CD8-positive, alpha-beta T cell (primary cell): ENCODE measurements at regions of chr12 and their contacts with region 1.

Region 1: DNA sequence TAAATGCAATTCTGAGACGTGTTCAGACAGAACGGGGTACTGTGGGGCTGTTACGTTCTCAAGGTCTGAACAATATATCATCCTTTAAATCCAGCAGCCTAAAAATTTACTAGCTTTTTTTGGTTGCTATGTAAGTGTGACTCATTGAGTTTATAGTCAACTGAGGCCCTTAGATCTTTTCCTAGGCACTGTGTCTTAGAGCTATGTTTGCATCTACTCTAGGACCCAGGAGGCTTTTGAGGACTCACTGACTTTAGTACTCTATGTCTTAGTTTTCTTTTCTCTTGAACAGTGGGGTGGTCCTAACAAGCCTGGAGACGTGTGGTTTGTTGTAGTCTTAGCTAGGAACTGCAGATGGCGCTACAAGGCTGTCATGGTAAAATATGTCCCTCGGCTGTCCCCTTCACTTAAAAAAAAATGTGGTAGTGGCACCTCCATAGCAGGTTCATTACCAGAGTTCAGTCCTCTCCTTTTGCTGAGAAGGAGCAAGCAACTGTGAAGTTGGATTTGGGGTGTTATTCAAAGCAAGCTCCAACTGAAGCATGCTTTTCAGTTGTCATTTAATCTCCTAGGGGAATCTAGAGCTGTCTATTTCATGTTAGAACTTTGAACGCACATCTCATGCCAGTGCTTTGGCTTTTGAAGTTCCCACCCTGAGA is 8.7 kb upstream of the SPATS2 start:
- DNase-seq: peak in 7 of 9 experiments; percentile 47 to 87 (median 63)
- ATAC-seq: peak; percentile 99
- H3K4me3 ChIP-seq: no peak overlapping the region
- H3K4me3 Mint-ChIP-seq: no peak overlapping the region
- H3K27ac ChIP-seq: no peak overlapping the region
- H3K27ac Mint-ChIP-seq: no peak overlapping the region
- H3K4me1 ChIP-seq: no peaks in the 10 kb centered on the region
- H3K4me1 Mint-ChIP-seq: peaks cover 2% of the 10 kb centered on the region
- H3K27me3 ChIP-seq: peaks cover 4 to 8% of the 10 kb centered on the region in 2 experiments
- H3K27me3 Mint-ChIP-seq: peaks cover 20% of the 10 kb centered on the region
- CTCF ChIP-seq: peak; percentile 67

Region 2: DNA sequence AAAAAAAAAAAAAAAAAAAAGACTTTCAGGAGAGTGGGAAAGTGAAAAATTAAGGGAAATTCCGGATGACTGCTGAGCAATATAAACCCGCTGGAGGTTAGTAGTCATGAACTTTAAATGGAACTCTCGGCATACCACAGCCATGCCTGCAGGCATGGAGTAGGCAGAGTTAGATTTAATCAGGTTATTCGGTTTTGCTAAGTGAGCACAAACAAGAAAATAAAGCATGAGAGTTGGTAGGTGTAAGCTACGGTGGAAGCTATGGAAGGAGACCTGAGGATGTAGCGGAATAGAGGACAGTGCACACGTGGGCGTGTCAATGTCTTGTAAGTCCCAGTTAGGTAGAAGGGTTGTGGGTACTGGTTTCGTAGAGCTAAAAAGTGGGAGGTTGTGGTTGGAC is 105.5 kb before region 1 on chr12:
- CTCF ChIA-PET with region 1: no interaction called
- POLR2A ChIA-PET with region 1: no interaction called
- intact Hi-C with region 1: no loop called
- DNase-seq: no peak
- ATAC-seq: no peak
- H3K4me3 ChIP-seq: no peak overlapping the region
- H3K4me3 Mint-ChIP-seq: no peak overlapping the region
- H3K27ac ChIP-seq: no peak overlapping the region
- H3K27ac Mint-ChIP-seq: no peak overlapping the region
- H3K4me1 ChIP-seq: no peaks in the 10 kb centered on the region
- H3K4me1 Mint-ChIP-seq: no peaks in the 10 kb centered on the region
- H3K27me3 ChIP-seq: no peaks in the 10 kb centered on the region
- H3K27me3 Mint-ChIP-seq: no peaks in the 10 kb centered on the region
- CTCF ChIP-seq: no peak

Region 3: DNA sequence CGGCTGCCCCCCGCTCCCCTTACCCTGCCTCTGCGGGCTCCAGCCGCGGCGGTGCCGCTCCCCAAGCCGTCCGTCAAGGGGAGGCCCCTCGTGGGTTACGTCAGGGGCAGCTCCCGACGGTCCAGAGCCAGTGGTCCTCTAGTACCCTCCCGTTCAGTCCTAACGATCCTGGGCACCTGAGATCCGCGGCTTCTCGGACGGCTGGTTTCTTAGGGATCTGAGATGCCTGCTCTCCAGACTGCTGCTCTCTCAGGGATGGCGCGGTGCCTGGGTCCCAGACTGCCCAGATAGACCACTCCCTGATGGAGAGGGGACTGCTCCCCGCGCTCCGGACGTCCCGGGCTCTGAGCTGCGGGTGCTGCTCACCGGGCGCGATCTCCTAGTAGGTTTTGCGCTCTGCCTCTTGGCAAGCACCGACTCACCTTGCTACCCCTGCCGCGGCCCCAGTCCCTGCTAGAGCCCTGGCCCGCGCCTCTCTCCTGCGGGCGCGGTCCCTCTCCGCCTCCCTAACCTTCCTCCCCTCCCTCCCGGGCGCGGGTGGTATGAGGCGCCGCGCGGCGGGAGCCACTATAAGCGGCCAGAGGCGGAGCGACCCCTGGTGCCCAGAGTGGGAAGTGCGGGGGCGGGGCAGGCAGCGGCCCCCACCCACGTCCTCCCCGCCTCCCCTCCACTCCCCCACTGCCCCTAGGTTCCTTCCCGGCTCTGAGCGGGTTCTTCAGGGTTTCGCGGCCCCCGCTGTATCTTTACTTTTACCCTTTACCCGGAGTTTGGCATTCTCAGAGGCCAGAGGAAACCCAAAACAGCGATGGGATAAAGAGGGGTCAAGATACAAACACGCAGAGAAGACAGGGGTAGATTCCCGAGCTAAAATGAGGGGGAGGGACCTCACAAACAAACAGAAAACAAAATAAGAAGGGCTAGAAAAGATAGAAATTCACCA is 21.7 kb before region 1 on chr12 and contains the start of gene C1QL4:
- CTCF ChIA-PET with region 1: interaction called, 25 read pairs
- POLR2A ChIA-PET with region 1: no interaction called
- intact Hi-C with region 1: no loop called
- DNase-seq: peak; percentile 79 to 94 (median 89)
- ATAC-seq: peak; percentile 97
- H3K4me3 ChIP-seq: peak within 1 kb of the TSS; percentile 47 to 51
- H3K4me3 Mint-ChIP-seq: peak within 1 kb of the TSS; percentile 75
- H3K27ac ChIP-seq: no peak within 1 kb of the TSS
- H3K27ac Mint-ChIP-seq: no peak within 1 kb of the TSS
- H3K4me1 ChIP-seq: peaks cover 8% of the 10 kb centered on the region
- H3K4me1 Mint-ChIP-seq: peaks cover 26% of the 10 kb centered on the region
- H3K27me3 ChIP-seq: peaks cover 18 to 36% of the 10 kb centered on the region in 2 experiments
- H3K27me3 Mint-ChIP-seq: peaks cover 51% of the 10 kb centered on the region
- CTCF ChIP-seq: peak; percentile 91
- total RNA-seq, gene C1QL4: not detected

Region 4: GRCh38 chr12:49388682-49389386 is 30.2 kb after region 1 on chr12:
- CTCF ChIA-PET with region 1: interaction called, 4 read pairs
- POLR2A ChIA-PET with region 1: no interaction called
- intact Hi-C with region 1: loop called in 1 of 2 experiments (anchors 1 kb)
- DNase-seq: peak; percentile 26 to 81 (median 71)
- ATAC-seq: peak; percentile 97
- H3K4me3 ChIP-seq: no peak overlapping the region
- H3K4me3 Mint-ChIP-seq: peak overlapping the region; percentile 40
- H3K27ac ChIP-seq: no peak overlapping the region
- H3K27ac Mint-ChIP-seq: no peak overlapping the region
- H3K4me1 ChIP-seq: no peaks in the 10 kb centered on the region
- H3K4me1 Mint-ChIP-seq: peaks cover 4% of the 10 kb centered on the region
- H3K27me3 ChIP-seq: no peaks in the 10 kb centered on the region
- H3K27me3 Mint-ChIP-seq: no peaks in the 10 kb centered on the region
- CTCF ChIP-seq: peak; percentile 35

Region 5: DNA sequence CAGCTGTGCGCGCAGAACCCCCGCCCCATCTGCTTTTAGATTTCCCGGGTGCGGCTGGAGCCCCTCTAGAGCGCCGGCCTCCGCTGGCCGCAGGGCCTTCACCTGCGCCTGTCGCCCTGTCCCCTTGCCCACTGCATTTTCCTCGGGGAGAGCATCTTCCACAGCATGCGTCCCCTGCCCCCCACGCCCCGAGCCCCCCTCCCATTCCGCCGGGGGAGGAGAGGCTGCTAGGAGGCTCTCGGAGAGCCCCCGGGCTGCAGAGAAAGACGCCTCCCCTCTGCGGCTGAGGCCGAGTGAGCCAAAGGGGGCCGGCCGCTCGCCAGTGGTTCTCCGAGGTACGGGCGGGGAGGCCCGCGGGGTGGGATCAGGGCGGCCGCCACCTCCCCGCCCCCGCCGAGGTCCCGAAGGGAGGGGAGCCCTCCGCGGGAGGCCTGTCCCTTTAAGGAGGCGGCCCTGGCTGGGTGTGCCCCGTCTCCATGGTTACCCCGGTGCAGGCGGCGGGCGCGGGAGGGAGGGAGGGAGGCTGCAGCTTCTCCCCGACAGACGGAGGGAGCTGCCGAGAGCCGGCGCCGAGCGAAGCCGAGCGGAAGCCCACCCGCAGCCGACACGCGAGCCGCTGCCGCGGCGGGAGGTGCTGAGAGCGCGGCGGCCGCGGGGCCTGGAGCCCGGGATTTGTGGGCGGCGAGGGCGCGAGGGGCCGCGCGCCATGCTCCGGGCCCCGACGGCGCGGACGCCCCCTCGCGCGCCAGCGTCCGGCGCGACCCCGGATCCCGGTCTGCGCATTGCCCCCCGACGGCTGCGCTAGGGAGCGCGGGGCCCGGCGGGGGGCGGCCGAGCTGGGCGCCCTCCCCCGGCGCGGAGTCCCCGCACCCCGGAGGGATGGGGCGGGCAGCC is 180.1 kb after region 1 on chr12 and contains the start of gene KCNH3:
- CTCF ChIA-PET with region 1: interaction called, 13 read pairs
- POLR2A ChIA-PET with region 1: no interaction called
- intact Hi-C with region 1: no loop called
- DNase-seq: peak; percentile 79 to 95 (median 91)
- ATAC-seq: peak; percentile 90
- H3K4me3 ChIP-seq: peak within 1 kb of the TSS; percentile 49 to 76
- H3K4me3 Mint-ChIP-seq: peak within 1 kb of the TSS; percentile 80
- H3K27ac ChIP-seq: no peak within 1 kb of the TSS
- H3K27ac Mint-ChIP-seq: no peak within 1 kb of the TSS
- H3K4me1 ChIP-seq: peaks cover 23% of the 10 kb centered on the region
- H3K4me1 Mint-ChIP-seq: peaks cover 33% of the 10 kb centered on the region
- H3K27me3 ChIP-seq: peaks cover 0 to 6% of the 10 kb centered on the region in 2 experiments
- H3K27me3 Mint-ChIP-seq: no peaks in the 10 kb centered on the region
- CTCF ChIP-seq: no peak
- total RNA-seq, gene KCNH3: 3.1 to 3.5 TPM

Region 6: GRCh38 chr12:49623142-49623904 is 264.7 kb after region 1 on chr12 and contains the start of gene PRPF40B:
- CTCF ChIA-PET with region 1: interaction called, 4 read pairs
- POLR2A ChIA-PET with region 1: no interaction called
- intact Hi-C with region 1: loop called in 1 of 2 experiments (anchors 2 kb)
- DNase-seq: peak; percentile 68 to 92 (median 84)
- ATAC-seq: peak; percentile 78
- H3K4me3 ChIP-seq: peak within 1 kb of the TSS; percentile 56 to 82
- H3K4me3 Mint-ChIP-seq: peak within 1 kb of the TSS; percentile 88
- H3K27ac ChIP-seq: peak within 1 kb of the TSS; percentile 56 to 63
- H3K27ac Mint-ChIP-seq: peak within 1 kb of the TSS; percentile 91
- H3K4me1 ChIP-seq: peaks cover 34% of the 10 kb centered on the region
- H3K4me1 Mint-ChIP-seq: peaks cover 27% of the 10 kb centered on the region
- H3K27me3 ChIP-seq: no peaks in the 10 kb centered on the region
- H3K27me3 Mint-ChIP-seq: no peaks in the 10 kb centered on the region
- CTCF ChIP-seq: peak; percentile 46
- total RNA-seq, gene PRPF40B: 3.4 to 4.2 TPM